ENCODE measurements at regions of chr16 and their contacts with region 1.

Region 1: GRCh38 chr16:49491771-49492761 is 118.5 kb downstream of the C16orf78 start:
- DNase-seq: peak; percentile 48 to 79 (median 66)
- H3K4me3 ChIP-seq: peak overlapping the region in 2 of 4 donors; percentile 13 to 50
- H3K27ac ChIP-seq: peak overlapping the region in 2 of 5 donors; percentile 21 to 38
- H3K4me1 ChIP-seq: peaks cover 0 to 6% of the 10 kb centered on the region in 2 donors
- H3K27me3 ChIP-seq: no peaks in the 10 kb centered on the region
- CTCF ChIP-seq: peak; percentile 66 to 92 (median 86)
- POLR2A ChIP-seq: no peak

Region 2: GRCh38 chr16:49395021-49395420 is 97.0 kb before region 1 on chr16:
- intact Hi-C with region 1: no loop called
- DNase-seq: no peak
- H3K4me3 ChIP-seq: no peak overlapping the region
- H3K27ac ChIP-seq: no peak overlapping the region
- H3K4me1 ChIP-seq: no peaks in the 10 kb centered on the region
- H3K27me3 ChIP-seq: peaks cover 6% of the 10 kb centered on the region
- CTCF ChIP-seq: no peak
- POLR2A ChIP-seq: no peak

Region 3: DNA sequence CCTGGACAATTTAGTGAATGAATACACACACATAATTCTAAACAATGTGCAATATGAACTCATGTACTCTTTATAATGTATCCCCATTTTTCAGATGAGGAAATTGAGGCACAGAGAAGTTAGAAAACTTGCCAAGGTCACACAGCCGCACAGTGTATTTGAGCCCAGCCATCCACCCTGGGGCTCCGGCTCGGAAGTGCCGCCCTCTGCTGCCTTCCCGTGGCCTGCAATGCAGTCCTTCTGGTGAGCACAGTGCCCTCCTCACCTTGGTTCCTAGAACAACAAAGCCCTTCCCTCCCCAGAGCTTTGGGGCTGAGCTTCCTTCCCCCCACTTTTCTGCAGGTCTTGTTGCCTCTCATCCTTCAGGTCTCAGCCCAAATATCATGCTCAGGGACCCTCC is 54.7 kb before region 1 on chr16:
- intact Hi-C with region 1: no loop called
- DNase-seq: no peak
- H3K4me3 ChIP-seq: no peak overlapping the region
- H3K27ac ChIP-seq: no peak overlapping the region
- H3K4me1 ChIP-seq: no peaks in the 10 kb centered on the region
- H3K27me3 ChIP-seq: no peaks in the 10 kb centered on the region
- CTCF ChIP-seq: no peak
- POLR2A ChIP-seq: no peak

Region 4: GRCh38 chr16:49592546-49593423 is 100.7 kb after region 1 on chr16:
- intact Hi-C with region 1: loop called (anchors 10 kb)
- DNase-seq: peak in 5 of 7 donors; percentile 15 to 55 (median 30)
- H3K4me3 ChIP-seq: no peak overlapping the region
- H3K27ac ChIP-seq: no peak overlapping the region
- H3K4me1 ChIP-seq: no peaks in the 10 kb centered on the region
- H3K27me3 ChIP-seq: no peaks in the 10 kb centered on the region
- CTCF ChIP-seq: peak; percentile 52 to 64 (median 62)
- POLR2A ChIP-seq: no peak

Region 5: GRCh38 chr16:49755313-49755620 is 263.2 kb after region 1 on chr16:
- intact Hi-C with region 1: loop called in 1 of 2 experiments (anchors 10 kb)
- DNase-seq: peak in 1 of 7 donors; percentile 3
- H3K4me3 ChIP-seq: peak overlapping the region in 2 of 4 donors; percentile 13 to 41
- H3K27ac ChIP-seq: peak overlapping the region in 3 of 5 donors; percentile 19 to 76 (median 57)
- H3K4me1 ChIP-seq: peaks cover 0 to 5% of the 10 kb centered on the region in 2 donors
- H3K27me3 ChIP-seq: no peaks in the 10 kb centered on the region
- CTCF ChIP-seq: peak in 4 of 6 experiments; percentile 16 to 39 (median 30)
- POLR2A ChIP-seq: no peak

Region 6: GRCh38 chr16:49855280-49855821 is 363.3 kb after region 1 on chr16:
- intact Hi-C with region 1: loop called in 1 of 2 experiments (anchors 5 kb)
- DNase-seq: peak; percentile 79 to 91 (median 82)
- H3K4me3 ChIP-seq: peak overlapping the region; percentile 18 to 94 (median 40)
- H3K27ac ChIP-seq: peak overlapping the region in 4 of 5 donors; percentile 11 to 94 (median 75)
- H3K4me1 ChIP-seq: peaks cover 11 to 29% of the 10 kb centered on the region in 2 donors
- H3K27me3 ChIP-seq: no peaks in the 10 kb centered on the region
- CTCF ChIP-seq: no peak
- POLR2A ChIP-seq: peak; percentile 31 to 51

Region 7: DNA sequence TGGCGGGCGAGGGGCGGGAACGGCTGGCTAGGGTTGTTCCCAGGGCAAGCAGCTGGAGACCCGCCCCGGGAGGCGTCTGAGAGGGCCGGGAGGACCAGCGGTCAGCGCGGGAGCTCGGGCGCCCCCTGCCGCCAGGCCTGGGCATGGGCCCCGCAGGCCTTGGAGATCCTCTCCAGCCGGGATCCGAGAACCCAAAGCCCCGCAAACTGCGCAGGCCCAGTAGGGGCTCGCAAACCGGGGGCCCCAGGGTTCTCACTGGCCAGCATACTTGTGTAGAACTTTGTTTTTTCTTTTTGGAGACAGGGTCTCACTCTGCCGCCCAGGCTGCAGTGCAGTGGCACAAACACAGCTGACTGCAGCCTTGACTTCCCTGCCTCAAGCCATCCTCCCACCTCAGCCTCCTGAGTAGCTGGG is 384.7 kb after region 1 on chr16:
- intact Hi-C with region 1: loop called in 1 of 2 experiments (anchors 5 kb)
- DNase-seq: peak; percentile 34 to 71 (median 60)
- H3K4me3 ChIP-seq: peak overlapping the region in 1 of 4 donors; percentile 40
- H3K27ac ChIP-seq: no peak overlapping the region
- H3K4me1 ChIP-seq: no peaks in the 10 kb centered on the region
- H3K27me3 ChIP-seq: no peaks in the 10 kb centered on the region
- CTCF ChIP-seq: peak; percentile 39 to 88 (median 76)
- POLR2A ChIP-seq: no peak

Region 8: DNA sequence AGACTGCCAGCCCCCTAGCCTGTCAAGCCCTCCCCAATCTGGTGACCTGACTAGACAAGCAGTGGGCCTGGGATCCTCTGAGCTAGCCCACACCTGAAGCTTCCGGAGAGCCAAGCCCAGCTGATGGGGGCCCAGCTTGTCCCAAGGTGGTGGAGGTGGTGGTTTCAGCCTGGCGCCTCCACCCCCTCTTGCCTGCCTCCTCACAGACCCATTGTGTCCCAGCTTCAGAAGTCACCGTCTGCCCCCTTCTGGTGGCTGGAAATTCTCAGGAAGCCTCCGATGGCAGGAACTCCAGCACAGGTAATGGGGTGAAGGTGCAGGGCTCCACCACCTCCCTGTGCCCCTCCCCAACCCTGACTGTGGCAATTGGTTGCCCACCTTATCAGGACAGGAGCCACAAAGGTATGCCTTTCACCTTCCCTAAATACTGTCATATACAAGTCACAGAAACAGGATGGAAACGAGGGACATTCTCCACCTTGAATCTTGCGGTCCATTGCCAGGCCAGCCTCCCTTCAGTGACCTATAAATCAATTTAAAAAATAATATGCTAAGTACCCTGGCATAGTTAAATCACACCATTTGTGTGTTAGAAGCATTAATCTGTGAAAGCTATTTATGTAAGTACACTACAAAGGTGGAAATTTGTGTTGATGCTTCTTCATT is 429.9 kb after region 1 on chr16:
- intact Hi-C with region 1: loop called in 1 of 2 experiments (anchors 10 kb)
- DNase-seq: peak; percentile 41 to 82 (median 63)
- H3K4me3 ChIP-seq: no peak overlapping the region
- H3K27ac ChIP-seq: no peak overlapping the region
- H3K4me1 ChIP-seq: no peaks in the 10 kb centered on the region
- H3K27me3 ChIP-seq: no peaks in the 10 kb centered on the region
- CTCF ChIP-seq: peak; percentile 34 to 75 (median 56)
- POLR2A ChIP-seq: no peak

Region 9: DNA sequence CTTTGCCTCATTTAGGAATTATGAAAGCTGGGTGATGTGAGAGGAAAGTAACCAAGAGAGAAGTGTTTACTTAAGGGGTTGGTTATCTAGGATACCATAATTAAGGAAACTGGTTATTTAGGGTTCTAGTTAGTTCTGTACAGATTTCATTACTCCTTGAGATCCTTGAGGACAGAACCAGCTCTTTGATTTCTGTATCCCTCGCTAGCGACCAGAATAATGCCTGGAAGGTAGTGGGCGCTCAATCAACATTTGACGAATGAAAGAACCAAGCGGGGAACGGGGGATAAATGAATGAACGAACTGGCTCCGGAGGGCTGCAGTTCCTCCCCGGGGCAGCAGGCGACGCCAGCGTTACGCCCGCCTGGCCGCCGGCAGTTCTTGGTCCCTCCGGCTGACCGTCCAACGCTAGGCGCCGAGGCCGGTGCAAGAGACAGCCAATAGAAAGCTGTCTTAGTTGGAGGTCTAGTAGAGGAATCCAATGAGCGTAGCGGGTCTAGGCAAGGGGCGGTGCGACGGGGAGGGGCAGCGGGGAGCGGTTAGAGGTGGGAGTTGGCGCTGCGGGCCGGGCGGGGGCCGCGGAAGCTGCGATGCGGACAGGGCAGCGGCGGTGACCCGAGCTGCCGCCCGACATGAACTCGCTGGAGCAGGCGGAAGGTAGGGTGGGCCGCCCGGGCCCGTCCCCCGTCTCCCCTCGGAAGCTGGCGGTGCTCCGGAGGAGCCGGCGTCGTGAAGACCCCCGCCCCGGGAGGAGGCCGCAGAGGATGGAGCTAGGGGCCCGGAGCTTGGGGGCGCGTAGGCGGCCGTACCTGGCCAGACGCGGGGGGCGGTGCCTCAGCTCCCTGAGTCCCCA is 532.8 kb after region 1 on chr16 and contains the start of gene CNEP1R1:
- intact Hi-C with region 1: no loop called
- DNase-seq: peak; percentile 93 to 98 (median 96)
- H3K4me3 ChIP-seq: peak within 1 kb of the TSS; percentile 31 to 84 (median 75)
- H3K27ac ChIP-seq: peak within 1 kb of the TSS; percentile 15 to 82 (median 77)
- H3K4me1 ChIP-seq: peaks cover 3 to 18% of the 10 kb centered on the region in 2 donors
- H3K27me3 ChIP-seq: no peaks in the 10 kb centered on the region
- CTCF ChIP-seq: peak; percentile 100
- POLR2A ChIP-seq: peak in 1 of 2 donors; percentile 41
- total RNA-seq, gene CNEP1R1: 14.7 to 25.3 (median 20.5) TPM

Measured in adrenal gland (tissue), 19 donors.